GM12878 (cell line): ENCODE measurements at regions of chr2 and their contacts with region 1.

Region 1: GRCh38 chr2:84946204-84947009 is 24.6 kb upstream of the KCMF1 start:
- DNase-seq: peak; percentile 93
- ATAC-seq: peak; percentile 72
- H3K4me3 ChIP-seq: peak overlapping the region; percentile 62
- H3K27ac ChIP-seq: peak overlapping the region; percentile 100
- H3K4me1 ChIP-seq: peaks cover 31% of the 10 kb centered on the region
- H3K27me3 ChIP-seq: no peaks in the 10 kb centered on the region
- CTCF ChIP-seq: peak in 2 of 3 experiments; percentile 31 to 39; a peak in 3 of 6 replicates
- EP300 ChIP-seq: peak; percentile 8 to 45; a peak in 1 of 4 replicates
- POLR2A ChIP-seq: peak; percentile 75
- RAD21 ChIP-seq: peak; percentile 54

Region 2: DNA sequence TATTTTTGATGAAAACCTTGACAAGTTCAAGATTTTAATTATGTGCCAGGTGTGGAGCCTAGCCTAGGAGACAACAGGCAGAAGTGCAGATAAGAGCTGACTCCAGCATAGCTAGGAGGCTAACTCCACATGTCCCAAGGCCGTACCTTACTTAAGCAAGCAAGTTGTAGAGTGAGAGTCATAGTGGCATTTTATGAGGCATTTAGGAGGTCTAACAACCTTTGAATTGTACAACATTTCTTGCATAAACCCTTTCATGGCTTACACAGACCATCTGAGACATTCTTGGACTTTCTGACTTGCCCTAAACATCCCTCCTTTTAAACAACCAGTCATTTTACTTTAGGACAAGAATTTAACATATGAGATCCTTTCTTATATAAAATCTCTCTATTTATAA is 479.0 kb before region 1 on chr2:
- CTCF ChIA-PET with region 1: no interaction called
- POLR2A ChIA-PET with region 1: no interaction called
- RAD21 ChIA-PET with region 1: no interaction called
- SMC1A ChIA-PET with region 1: no interaction called
- in situ Hi-C with region 1: no loop called
- intact Hi-C with region 1: no loop called
- DNase-seq: no peak
- ATAC-seq: no peak
- H3K4me3 ChIP-seq: no peak overlapping the region
- H3K27ac ChIP-seq: no peak overlapping the region
- H3K4me1 ChIP-seq: no peaks in the 10 kb centered on the region
- H3K27me3 ChIP-seq: no peaks in the 10 kb centered on the region
- CTCF ChIP-seq: no peak
- EP300 ChIP-seq: no peak
- POLR2A ChIP-seq: no peak
- RAD21 ChIP-seq: no peak

Region 3: GRCh38 chr2:84919885-84920580 is 26.4 kb before region 1 on chr2:
- CTCF ChIA-PET with region 1: interaction called, 275 read pairs
- POLR2A ChIA-PET with region 1: interaction called, 49 read pairs
- RAD21 ChIA-PET with region 1: interaction called, 141 read pairs
- SMC1A ChIA-PET with region 1: interaction called, 176 read pairs
- in situ Hi-C with region 1: no loop called
- intact Hi-C with region 1: no loop called
- DNase-seq: no peak
- ATAC-seq: peak; percentile 64
- H3K4me3 ChIP-seq: peak overlapping the region; percentile 4
- H3K27ac ChIP-seq: peak overlapping the region; percentile 74
- H3K4me1 ChIP-seq: peaks cover 30% of the 10 kb centered on the region
- H3K27me3 ChIP-seq: no peaks in the 10 kb centered on the region
- CTCF ChIP-seq: no peak
- EP300 ChIP-seq: no peak
- POLR2A ChIP-seq: no peak
- RAD21 ChIP-seq: no peak

Region 4: GRCh38 chr2:84931384-84931821 is 15.0 kb before region 1 on chr2:
- CTCF ChIA-PET with region 1: interaction called, 275 read pairs
- POLR2A ChIA-PET with region 1: interaction called, 79 read pairs
- RAD21 ChIA-PET with region 1: interaction called, 160 read pairs
- SMC1A ChIA-PET with region 1: interaction called, 190 read pairs
- in situ Hi-C with region 1: no loop called
- intact Hi-C with region 1: loop called (anchors 1 kb)
- DNase-seq: peak; percentile 71
- ATAC-seq: peak; percentile 71
- H3K4me3 ChIP-seq: peak overlapping the region; percentile 10; the same call in 1 of the 2 replicates
- H3K27ac ChIP-seq: peak overlapping the region; percentile 95
- H3K4me1 ChIP-seq: peaks cover 12% of the 10 kb centered on the region
- H3K27me3 ChIP-seq: no peaks in the 10 kb centered on the region
- CTCF ChIP-seq: no peak
- EP300 ChIP-seq: peak; percentile 63 to 71; a peak in 3 of 4 replicates
- POLR2A ChIP-seq: no peak
- RAD21 ChIP-seq: no peak

Region 5: DNA sequence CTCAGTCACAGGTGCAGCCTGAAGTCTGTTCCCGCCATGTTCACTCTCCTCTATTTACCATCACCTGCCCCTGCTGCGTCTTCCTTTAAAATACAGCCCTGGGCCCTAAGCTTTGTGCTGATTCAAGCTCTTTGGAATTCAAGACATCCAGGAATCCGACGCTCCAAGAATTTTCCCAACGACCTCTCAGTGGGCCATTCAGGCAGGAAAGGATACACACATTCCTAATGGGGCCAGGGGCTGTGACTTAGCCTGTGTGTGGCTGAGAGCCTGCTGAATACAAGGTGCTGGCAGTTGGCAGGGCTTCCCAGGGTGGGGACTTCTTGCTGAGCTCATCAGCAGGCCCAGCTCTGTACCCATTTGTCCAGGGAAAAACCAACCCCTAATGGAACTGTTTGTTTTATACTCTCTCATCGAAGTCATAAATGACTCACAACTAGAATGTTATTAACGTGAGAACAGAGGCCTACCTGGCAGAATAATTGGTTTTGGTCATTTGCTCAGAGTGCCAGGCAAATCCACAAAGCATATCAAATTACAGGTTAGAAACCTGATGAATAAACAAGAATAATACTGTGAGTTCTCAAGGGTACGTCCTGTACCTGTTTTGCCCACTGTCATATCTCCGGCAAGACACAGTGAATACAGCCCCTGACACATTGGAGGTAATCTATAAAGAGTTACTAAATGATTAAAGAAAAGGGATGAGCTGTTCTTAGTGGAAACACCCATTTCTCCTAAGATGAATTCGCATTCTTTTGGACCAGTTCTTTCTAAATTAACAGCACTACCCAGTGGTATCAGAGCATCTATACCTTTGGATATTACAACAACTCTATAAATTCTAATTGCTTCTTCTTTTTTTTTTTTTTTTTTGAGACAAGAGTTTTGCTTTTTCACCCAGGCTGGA is 12.0 kb after region 1 on chr2:
- CTCF ChIA-PET with region 1: interaction called, 14 read pairs
- POLR2A ChIA-PET with region 1: interaction called, 11 read pairs
- RAD21 ChIA-PET with region 1: interaction called, 12 read pairs
- SMC1A ChIA-PET with region 1: interaction called, 378 read pairs
- in situ Hi-C with region 1: no loop called
- intact Hi-C with region 1: no loop called
- DNase-seq: no peak
- ATAC-seq: peak; percentile 77
- H3K4me3 ChIP-seq: no peak overlapping the region
- H3K27ac ChIP-seq: no peak overlapping the region
- H3K4me1 ChIP-seq: peaks cover 8% of the 10 kb centered on the region
- H3K27me3 ChIP-seq: no peaks in the 10 kb centered on the region
- CTCF ChIP-seq: no peak
- EP300 ChIP-seq: no peak
- POLR2A ChIP-seq: no peak
- RAD21 ChIP-seq: no peak

Region 6: DNA sequence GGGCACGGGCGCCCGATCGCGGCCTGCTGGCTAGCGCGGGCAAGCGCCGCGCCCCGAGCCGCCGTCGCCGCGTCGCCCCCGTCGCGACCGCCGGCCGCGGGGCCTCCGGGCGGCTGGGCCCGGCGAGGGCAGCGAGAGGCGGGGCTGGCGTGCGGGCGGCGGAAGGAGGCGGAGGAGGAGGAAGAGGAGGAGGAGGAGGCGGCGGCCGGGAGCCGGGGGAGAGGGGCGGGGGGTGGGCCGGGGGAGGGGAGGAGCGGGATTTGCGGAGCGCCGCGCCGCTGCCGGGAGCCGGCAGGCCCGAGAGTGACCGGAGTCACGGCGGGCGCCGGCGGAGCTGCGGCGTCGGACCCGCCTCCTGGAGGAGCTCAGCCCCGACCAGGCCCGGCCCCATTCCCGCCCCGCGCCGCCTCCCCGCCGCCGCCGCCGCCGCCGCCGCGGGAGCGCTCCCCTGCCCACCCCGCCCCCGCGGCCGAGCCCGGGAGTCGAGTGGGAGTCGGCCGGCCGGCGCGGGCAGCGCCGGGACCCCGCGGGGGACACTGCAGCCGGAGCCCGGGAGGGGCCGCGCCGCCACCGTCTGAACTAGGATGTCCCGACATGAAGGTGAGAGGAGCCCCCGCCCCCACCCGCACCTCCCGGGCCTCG is 24.6 kb after region 1 on chr2 and contains the start of gene KCMF1:
- CTCF ChIA-PET with region 1: interaction called, 61 read pairs
- POLR2A ChIA-PET with region 1: interaction called, 265 read pairs
- RAD21 ChIA-PET with region 1: interaction called, 300 read pairs
- SMC1A ChIA-PET with region 1: interaction called, 378 read pairs
- in situ Hi-C with region 1: no loop called
- intact Hi-C with region 1: loop called (anchors 1 kb)
- DNase-seq: no peak
- ATAC-seq: peak; percentile 41
- H3K4me3 ChIP-seq: peak within 1 kb of the TSS; percentile 85
- H3K27ac ChIP-seq: peak within 1 kb of the TSS; percentile 93
- H3K4me1 ChIP-seq: no peaks in the 10 kb centered on the region
- H3K27me3 ChIP-seq: no peaks in the 10 kb centered on the region
- CTCF ChIP-seq: no peak
- EP300 ChIP-seq: no peak
- POLR2A ChIP-seq: peak; percentile 61
- RAD21 ChIP-seq: no peak
- polyA plus RNA-seq, gene KCMF1: 8.4 to 9.8 TPM

Region 7: DNA sequence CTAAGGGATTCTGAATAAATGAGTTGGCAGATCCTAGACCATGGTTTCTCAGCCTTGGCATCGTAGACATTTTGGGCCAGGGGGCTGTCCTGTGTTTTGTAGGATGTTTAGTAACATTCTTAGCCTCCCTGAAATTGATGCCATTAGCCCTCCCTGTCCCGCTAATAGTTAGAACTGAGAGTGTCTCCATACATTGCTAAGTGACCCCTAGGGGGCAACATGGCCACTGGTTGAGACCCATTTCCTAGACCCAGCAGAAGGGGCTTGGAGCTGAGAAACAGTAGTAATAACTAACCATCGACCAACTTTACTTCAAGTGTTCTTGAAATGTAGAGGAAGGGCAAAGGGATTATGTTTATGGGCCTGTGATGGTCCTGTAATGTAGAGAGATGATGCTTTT is 65.3 kb after region 1 on chr2:
- CTCF ChIA-PET with region 1: interaction called, 61 read pairs
- POLR2A ChIA-PET with region 1: interaction called, 6 read pairs
- RAD21 ChIA-PET with region 1: interaction called, 21 read pairs
- SMC1A ChIA-PET with region 1: interaction called, 35 read pairs
- in situ Hi-C with region 1: no loop called
- intact Hi-C with region 1: loop called (anchors 5 kb)
- DNase-seq: no peak
- ATAC-seq: peak; percentile 29; the same call in 2 of the 3 replicates
- H3K4me3 ChIP-seq: no peak overlapping the region
- H3K27ac ChIP-seq: no peak overlapping the region
- H3K4me1 ChIP-seq: peaks cover 32% of the 10 kb centered on the region
- H3K27me3 ChIP-seq: no peaks in the 10 kb centered on the region
- CTCF ChIP-seq: peak in 1 of 3 experiments; percentile 9; a peak in 2 of 6 replicates
- EP300 ChIP-seq: no peak
- POLR2A ChIP-seq: no peak
- RAD21 ChIP-seq: no peak

Region 8: DNA sequence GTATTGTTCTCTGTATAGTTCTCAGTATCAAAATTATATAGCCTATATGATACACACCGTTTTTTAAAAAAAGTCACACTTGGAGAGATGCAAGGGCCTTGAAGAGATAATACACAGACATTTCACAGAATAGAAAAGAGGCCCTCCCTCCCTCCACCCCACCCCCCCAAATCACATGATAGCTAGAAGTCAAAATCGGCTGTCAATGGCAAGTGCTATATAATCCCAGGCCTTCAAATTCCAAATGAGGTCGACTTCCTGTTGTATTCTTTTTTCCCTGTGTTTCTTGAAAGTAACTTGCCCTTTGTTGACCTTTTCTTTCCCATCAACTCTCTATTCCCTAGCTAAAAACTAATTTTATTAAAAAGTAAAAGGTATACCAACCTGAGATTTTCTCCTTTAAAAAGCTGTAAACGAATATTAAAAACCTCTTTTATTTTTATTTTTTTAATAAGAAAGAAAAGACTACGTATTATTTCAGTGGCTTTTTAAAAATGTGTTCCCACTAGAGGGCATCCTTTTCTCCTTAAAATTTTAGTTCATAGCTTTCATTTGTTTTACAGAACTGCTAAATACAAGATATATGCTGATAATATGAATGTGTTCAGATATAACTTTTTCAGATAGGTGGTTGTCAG is 71.1 kb after region 1 on chr2:
- CTCF ChIA-PET with region 1: interaction called, 61 read pairs
- POLR2A ChIA-PET with region 1: interaction called, 6 read pairs
- RAD21 ChIA-PET with region 1: interaction called, 21 read pairs
- SMC1A ChIA-PET with region 1: interaction called, 35 read pairs
- in situ Hi-C with region 1: no loop called
- intact Hi-C with region 1: loop called (anchors 5 kb)
- DNase-seq: no peak
- ATAC-seq: 0 out of 3 replicates have a peak, but pooled peaks have one; percentile 20
- H3K4me3 ChIP-seq: no peak overlapping the region
- H3K27ac ChIP-seq: no peak overlapping the region
- H3K4me1 ChIP-seq: peaks cover 13% of the 10 kb centered on the region; the same call in 1 of the 2 replicates
- H3K27me3 ChIP-seq: no peaks in the 10 kb centered on the region
- CTCF ChIP-seq: peak in 2 of 3 experiments; percentile 3 to 23; a peak in 2 of 6 replicates
- EP300 ChIP-seq: no peak
- POLR2A ChIP-seq: no peak
- RAD21 ChIP-seq: no peak

Region 9: GRCh38 chr2:85175369-85176299 is 229.2 kb after region 1 on chr2:
- CTCF ChIA-PET with region 1: no interaction called
- POLR2A ChIA-PET with region 1: no interaction called
- RAD21 ChIA-PET with region 1: no interaction called
- SMC1A ChIA-PET with region 1: no interaction called
- in situ Hi-C with region 1: no loop called
- intact Hi-C with region 1: no loop called
- DNase-seq: no peak
- ATAC-seq: no peak
- H3K4me3 ChIP-seq: no peak overlapping the region
- H3K27ac ChIP-seq: no peak overlapping the region
- H3K4me1 ChIP-seq: no peaks in the 10 kb centered on the region
- H3K27me3 ChIP-seq: peaks cover 4 to 11% of the 10 kb centered on the region in 2 experiments
- CTCF ChIP-seq: no peak
- EP300 ChIP-seq: no peak
- POLR2A ChIP-seq: no peak
- RAD21 ChIP-seq: no peak